K562 (cell line): ENCODE measurements at regions of chr19 and their contacts with region 1.

Region 1: DNA sequence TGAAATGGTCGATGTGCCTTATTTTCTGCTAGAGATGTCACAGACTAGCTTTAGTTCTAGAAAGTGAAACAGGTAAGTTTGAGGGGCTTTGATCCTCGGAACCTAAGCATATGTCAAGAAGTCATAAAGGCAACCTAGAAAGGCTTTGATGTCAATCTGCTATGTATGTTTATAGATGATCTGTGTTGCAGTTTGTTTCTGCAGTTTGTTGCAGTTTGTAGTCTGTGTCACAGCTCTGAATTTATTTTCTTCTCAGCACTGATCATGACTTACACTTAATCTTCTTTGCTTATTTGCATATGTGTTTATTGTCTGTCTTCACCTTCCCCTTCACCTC is 5.9 kb downstream of the LSM14A start:
- DNase-seq: no peak
- ATAC-seq: no peak
- H3K4me3 ChIP-seq: no peak overlapping the region
- H3K27ac ChIP-seq: no peak overlapping the region
- H3K4me1 ChIP-seq: peaks cover 12 to 37% of the 10 kb centered on the region in 2 experiments
- H3K27me3 ChIP-seq: no peaks in the 10 kb centered on the region
- CTCF ChIP-seq: no peak
- EP300 ChIP-seq: no peak
- POLR2A ChIP-seq: no peak
- RAD21 ChIP-seq: no peak

Region 2: GRCh38 chr19:33712268-33712667 is 466.0 kb before region 1 on chr19:
- CTCF ChIA-PET with region 1: no interaction called
- POLR2A ChIA-PET with region 1: no interaction called
- in situ Hi-C with region 1: no loop called
- intact Hi-C with region 1: no loop called
- DNase-seq: no peak
- ATAC-seq: no peak
- H3K4me3 ChIP-seq: no peak overlapping the region
- H3K27ac ChIP-seq: no peak overlapping the region
- H3K4me1 ChIP-seq: no peaks in the 10 kb centered on the region
- H3K27me3 ChIP-seq: peaks cover 0 to 8% of the 10 kb centered on the region in 2 experiments; a peak in 2 of 5 replicates
- CTCF ChIP-seq: no peak
- EP300 ChIP-seq: no peak
- POLR2A ChIP-seq: no peak
- RAD21 ChIP-seq: no peak

Region 3: DNA sequence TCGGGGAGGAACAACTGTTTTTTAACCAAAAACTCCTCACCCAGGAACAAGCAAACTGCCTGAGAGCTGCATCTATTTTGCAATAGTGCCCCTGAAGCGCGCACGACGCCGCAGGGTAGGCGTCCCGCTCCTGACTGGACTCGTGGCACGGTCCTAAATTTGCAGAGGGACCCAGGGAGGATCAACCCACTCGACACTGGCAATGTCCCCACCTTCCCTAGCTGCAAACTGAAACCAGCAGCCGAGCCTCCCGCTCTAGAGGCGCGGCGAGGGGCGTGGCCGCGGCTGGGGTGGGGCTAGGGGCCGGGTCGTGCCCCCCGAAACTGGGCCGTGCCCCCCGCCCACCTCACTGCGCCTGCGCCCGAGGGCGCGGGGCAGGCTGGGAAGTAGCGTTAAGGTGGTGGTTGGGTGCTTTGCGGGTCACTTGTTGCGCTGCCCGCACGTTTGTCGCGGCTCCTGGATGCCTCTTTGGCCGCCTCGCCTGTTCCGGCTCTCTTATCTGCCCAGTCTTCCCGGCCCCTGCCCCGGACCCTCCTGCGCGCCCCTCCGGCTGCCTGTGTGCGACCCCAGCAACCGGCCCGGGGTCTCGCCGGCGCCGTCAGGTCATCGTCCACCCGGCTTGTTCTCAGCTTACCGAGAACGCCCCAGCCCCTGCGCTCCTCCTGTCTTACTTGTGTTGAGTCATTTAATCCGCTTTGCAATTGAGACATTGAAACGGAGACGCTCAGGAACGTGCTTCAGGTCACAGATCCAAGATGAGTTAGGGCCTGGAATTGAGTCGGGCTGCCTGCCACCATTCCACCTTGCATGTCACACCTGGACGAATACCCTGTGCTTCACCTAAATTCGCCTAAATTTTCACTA is 43.8 kb before region 1 on chr19:
- CTCF ChIA-PET with region 1: no interaction called
- POLR2A ChIA-PET with region 1: no interaction called
- in situ Hi-C with region 1: no loop called
- intact Hi-C with region 1: no loop called
- DNase-seq: peak; percentile 93 to 99 (median 98)
- ATAC-seq: peak; percentile 97
- H3K4me3 ChIP-seq: peak overlapping the region; percentile 60
- H3K27ac ChIP-seq: peak overlapping the region; percentile 76
- H3K4me1 ChIP-seq: peaks cover 6 to 14% of the 10 kb centered on the region in 2 experiments; a peak in 3 of 5 replicates
- H3K27me3 ChIP-seq: peaks cover 0 to 11% of the 10 kb centered on the region in 2 experiments; a peak in 2 of 5 replicates
- CTCF ChIP-seq: no peak
- EP300 ChIP-seq: no peak
- POLR2A ChIP-seq: peak; percentile 95
- RAD21 ChIP-seq: no peak

Region 4: GRCh38 chr19:34155686-34156085 is 22.6 kb before region 1 on chr19:
- CTCF ChIA-PET with region 1: no interaction called
- POLR2A ChIA-PET with region 1: no interaction called
- in situ Hi-C with region 1: no loop called
- intact Hi-C with region 1: no loop called
- DNase-seq: no peak
- ATAC-seq: no peak
- H3K4me3 ChIP-seq: no peak overlapping the region
- H3K27ac ChIP-seq: no peak overlapping the region
- H3K4me1 ChIP-seq: no peaks in the 10 kb centered on the region; a peak in 1 of 5 replicates
- H3K27me3 ChIP-seq: 0 out of 5 replicates have a peak, but pooled peaks cover 0 to 2% of the 10 kb centered on the region in 2 experiments
- CTCF ChIP-seq: no peak
- EP300 ChIP-seq: no peak
- POLR2A ChIP-seq: no peak
- RAD21 ChIP-seq: no peak

Region 5: DNA sequence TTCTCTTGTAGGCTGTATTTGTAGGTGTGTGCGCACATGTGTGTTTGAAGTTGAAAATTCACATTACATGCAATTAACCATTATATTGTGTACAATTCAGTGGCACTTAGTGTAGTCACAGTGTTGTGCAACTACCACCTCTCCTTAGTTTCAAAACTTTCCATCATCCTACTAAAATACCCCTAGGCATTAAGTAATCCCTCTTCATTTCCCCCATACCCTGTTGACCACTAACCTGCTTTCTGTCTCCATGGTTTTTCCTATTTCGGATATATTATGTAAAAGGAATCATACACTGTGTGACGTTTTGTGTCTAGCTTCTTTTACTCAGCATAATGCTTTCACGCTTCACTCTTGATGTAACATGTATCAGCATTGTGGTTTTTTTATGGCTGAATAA is 10.2 kb after region 1 on chr19:
- CTCF ChIA-PET with region 1: no interaction called
- POLR2A ChIA-PET with region 1: interaction called, 12 read pairs
- in situ Hi-C with region 1: no loop called
- intact Hi-C with region 1: no loop called
- DNase-seq: no peak
- ATAC-seq: no peak
- H3K4me3 ChIP-seq: no peak overlapping the region
- H3K27ac ChIP-seq: no peak overlapping the region
- H3K4me1 ChIP-seq: peaks cover 2 to 13% of the 10 kb centered on the region in 2 experiments; a peak in 4 of 5 replicates
- H3K27me3 ChIP-seq: no peaks in the 10 kb centered on the region
- CTCF ChIP-seq: no peak
- EP300 ChIP-seq: no peak
- POLR2A ChIP-seq: no peak
- RAD21 ChIP-seq: no peak